ENCODE measurements at regions of chr1 and their contacts with region 1.

Region 1: DNA sequence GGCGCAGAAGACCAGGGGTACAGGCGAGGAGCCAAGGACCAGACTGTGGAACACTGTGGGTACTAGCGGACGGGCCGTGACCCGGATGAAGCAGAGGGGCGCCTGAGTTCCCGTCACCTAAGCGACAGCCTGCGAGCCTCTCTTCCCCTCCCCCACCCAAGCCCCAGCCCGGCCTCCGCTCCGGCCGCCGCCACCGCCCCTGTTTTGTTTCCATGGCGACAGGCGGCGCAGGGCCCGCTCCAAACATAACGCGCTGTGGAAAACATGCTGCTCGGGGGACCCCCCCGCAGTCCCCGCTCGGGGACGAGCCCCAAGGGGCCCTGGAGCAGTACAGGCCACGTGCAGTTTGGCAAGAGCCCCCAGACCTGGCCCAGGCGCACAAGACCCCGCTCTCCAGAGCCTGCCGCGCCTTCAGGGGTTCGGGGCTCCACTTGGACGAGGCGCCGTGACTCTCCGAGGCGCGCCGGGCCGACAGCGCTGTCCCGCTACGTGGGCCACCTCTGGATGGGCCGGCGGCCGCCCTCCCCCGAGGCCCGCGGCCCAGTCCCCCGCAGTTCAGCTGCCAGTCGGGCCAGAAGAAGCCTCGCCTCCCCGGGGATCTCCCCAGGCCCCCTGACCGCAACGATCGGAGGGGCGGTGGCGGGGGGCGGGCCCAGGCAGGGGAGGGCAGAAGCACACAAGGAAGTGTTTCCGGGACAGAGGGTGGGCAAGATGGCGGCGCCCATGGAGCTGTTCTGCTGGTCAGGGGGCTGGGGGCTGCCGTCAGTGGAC is at the start of gene MTX1:
- DNase-seq: peak; percentile 78
- H3K4me3 ChIP-seq: peak within 1 kb of the TSS; percentile 77 to 95
- H3K27ac ChIP-seq: peak within 1 kb of the TSS; percentile 90 to 98
- H3K4me1 ChIP-seq: peaks cover 7% of the 10 kb centered on the region
- H3K27me3 ChIP-seq: no peaks in the 10 kb centered on the region
- CTCF ChIP-seq: peak in 1 of 4 experiments; percentile 12
- POLR2A ChIP-seq: peak; percentile 59
- total RNA-seq, gene MTX1: 49.6 to 57.1 TPM

Region 2: GRCh38 chr1:155227261-155228095 is 18.8 kb after region 1 on chr1:
- intact Hi-C with region 1: loop called (anchors 1 kb)
- DNase-seq: peak; percentile 98
- H3K4me3 ChIP-seq: peak overlapping the region; percentile 33 to 58
- H3K27ac ChIP-seq: peak overlapping the region; percentile 72 to 74
- H3K4me1 ChIP-seq: no peaks in the 10 kb centered on the region
- H3K27me3 ChIP-seq: no peaks in the 10 kb centered on the region
- CTCF ChIP-seq: peak in 1 of 4 experiments; percentile 38
- POLR2A ChIP-seq: peak; percentile 75

Region 3: GRCh38 chr1:155244368-155245162 is 35.8 kb after region 1 on chr1:
- intact Hi-C with region 1: loop called (anchors 5 kb)
- DNase-seq: peak; percentile 96
- H3K4me3 ChIP-seq: peak overlapping the region; percentile 50 to 55
- H3K27ac ChIP-seq: peak overlapping the region; percentile 88 to 89
- H3K4me1 ChIP-seq: no peaks in the 10 kb centered on the region
- H3K27me3 ChIP-seq: no peaks in the 10 kb centered on the region
- CTCF ChIP-seq: peak in 3 of 4 experiments; percentile 63 to 97 (median 97)
- POLR2A ChIP-seq: peak; percentile 80

Region 4: DNA sequence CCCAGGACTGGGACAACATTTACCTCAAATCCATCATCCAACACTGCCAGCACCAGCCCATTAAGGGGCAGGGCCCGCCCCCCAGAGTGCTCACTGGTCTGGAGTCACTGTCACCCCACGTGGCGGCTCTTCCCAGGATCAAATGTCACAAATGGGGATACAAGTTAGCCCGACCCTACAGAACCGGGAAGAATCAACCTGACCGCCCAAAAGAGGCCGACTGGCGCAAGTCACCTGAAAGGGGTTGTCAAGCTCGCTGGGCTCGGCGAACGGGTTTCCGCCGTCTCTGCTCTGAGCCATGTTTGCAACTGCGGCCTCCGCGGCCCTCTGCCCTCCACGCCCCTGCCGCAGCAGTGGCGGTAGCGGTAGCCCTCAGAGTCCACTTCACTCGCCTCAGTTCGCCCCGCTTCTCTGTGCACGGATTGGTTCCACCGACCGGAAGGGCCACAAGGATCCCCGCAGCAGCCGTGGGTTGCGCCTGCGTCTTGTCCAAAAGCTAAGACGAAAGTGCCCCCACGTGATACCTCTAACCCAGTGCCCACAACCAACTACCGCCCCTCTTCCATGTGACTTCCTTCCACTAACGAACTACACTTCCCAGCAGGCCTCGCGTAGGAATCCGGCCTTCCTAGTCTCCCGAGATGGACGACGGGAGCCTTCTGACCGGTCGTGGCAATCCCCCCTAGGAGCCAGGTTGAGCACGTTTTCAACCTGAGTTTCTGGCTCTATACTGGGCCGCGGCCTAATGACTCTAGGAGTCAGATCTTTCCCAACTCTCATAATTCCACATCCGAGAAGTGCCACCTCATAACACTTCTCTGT is 53.3 kb after region 1 on chr1 and contains the start of gene SCAMP3:
- intact Hi-C with region 1: no loop called
- DNase-seq: peak; percentile 98
- H3K4me3 ChIP-seq: peak within 1 kb of the TSS; percentile 65 to 68
- H3K27ac ChIP-seq: peak within 1 kb of the TSS; percentile 72 to 79
- H3K4me1 ChIP-seq: no peaks in the 10 kb centered on the region
- H3K27me3 ChIP-seq: no peaks in the 10 kb centered on the region
- CTCF ChIP-seq: no peak
- POLR2A ChIP-seq: peak; percentile 58
- total RNA-seq, gene SCAMP3: 84.1 to 97.8 TPM

Region 5: DNA sequence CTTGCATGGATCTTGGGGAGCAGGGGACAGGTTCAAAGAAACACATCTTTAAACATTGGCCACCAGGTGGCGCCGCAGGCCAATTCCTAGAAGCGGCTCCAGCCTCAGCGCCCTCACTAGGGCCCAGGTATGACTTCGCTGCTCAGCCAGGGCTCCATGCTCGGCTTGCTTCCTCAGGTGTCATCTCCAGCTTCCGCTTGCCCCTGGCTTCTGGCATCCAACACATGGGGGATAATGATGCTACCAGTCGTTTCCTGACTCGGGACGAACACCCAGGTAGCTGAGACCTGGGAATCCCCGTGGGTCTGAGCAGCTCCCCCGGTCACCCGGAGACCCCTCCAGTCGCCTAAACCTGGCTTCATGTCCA is 882.1 kb after region 1 on chr1:
- intact Hi-C with region 1: no loop called
- DNase-seq: peak; percentile 86
- H3K4me3 ChIP-seq: no peak overlapping the region
- H3K27ac ChIP-seq: no peak overlapping the region
- H3K4me1 ChIP-seq: no peaks in the 10 kb centered on the region
- H3K27me3 ChIP-seq: no peaks in the 10 kb centered on the region
- CTCF ChIP-seq: peak; percentile 63 to 93 (median 90)
- POLR2A ChIP-seq: no peak